Activated CD4-positive, alpha-beta memory T cell treated with anti-CD3 and anti-CD28 coated beads for 36 hours (primary cell): ENCODE measurements at regions of chr1 and their contacts with region 1.

Region 1: DNA sequence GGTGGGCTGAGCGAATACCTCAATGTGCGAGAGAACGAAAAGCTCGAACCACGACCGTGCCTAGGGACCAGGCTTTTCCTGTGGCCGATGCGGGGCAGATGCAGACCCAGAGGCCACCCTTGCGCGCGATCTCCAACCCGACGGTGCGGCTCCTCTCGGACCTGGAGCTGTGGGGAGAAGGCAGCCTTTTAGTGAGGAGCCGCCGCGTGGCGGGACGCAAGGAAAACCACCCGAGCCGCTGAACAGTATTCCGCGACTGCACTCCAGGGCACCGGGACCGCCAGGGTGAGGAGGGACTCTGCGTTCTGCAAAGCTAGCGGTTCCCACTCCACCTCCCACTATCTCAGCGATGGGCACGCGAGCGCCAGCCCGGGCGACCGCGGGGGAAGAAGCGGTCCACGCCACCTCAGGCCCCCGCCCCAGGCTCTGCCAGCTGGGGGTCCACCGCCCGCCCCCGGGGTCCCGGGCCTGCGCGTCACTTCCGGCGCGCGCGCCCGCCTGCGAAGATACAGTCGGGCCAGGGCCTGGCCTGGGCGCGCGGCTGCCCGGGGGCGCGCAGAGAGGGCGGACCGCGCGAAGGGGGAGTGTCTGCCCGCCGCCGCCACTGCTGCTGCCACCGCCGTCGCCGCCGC is 66.5 kb upstream of the PRKACB start:
- DNase-seq: peak; percentile 78
- H3K4me3 Mint-ChIP-seq: peak overlapping the region; percentile 83
- H3K27ac Mint-ChIP-seq: peak overlapping the region; percentile 38
- H3K4me1 Mint-ChIP-seq: peaks cover 11% of the 10 kb centered on the region
- H3K27me3 Mint-ChIP-seq: peaks cover 3% of the 10 kb centered on the region

Region 2: DNA sequence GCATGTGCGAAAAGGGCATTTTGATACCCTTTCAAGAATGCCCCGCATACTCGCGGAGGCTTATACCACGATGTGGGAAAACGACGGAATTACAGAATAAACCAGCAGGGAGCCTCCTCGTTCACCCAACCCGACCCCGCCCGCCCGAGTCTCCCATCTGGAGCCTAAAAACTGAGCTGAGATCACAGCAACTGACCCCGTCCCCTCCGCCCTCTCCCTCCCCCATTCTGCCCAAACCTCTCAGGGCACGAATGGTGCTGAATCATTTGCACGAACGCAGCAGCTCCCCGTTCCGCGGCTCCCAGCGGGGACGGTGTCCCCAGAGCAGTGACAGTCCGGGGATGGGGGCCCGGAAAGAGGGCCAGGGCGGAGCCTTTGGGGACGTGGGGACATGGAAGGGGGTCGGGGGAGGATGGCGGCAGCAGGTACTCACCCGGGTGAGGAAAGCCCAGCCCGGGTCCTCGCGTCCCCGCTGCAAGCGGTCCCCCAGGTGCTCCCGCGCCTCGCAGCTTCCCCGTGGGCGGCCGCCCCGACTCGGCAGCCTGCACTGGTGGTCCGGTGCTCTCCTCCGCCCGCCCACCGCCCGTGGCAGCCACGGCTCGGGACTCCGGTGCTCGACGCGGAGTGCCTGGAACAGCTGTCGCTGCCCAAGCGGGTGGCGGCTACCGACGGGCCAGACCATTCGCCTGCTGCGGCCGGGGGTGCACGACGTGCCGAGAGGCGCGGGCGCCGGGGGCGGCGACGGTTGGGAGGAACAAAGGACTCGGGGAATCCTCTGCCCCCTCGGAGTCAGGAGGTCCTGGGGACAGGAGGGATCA is 78.9 kb before region 1 on chr1 and contains the start of gene TTLL7:
- CTCF ChIA-PET with region 1: no interaction called
- POLR2A ChIA-PET with region 1: no interaction called
- intact Hi-C with region 1: loop called (anchors 2 kb)
- DNase-seq: peak; percentile 73
- H3K4me3 Mint-ChIP-seq: peak within 1 kb of the TSS; percentile 73
- H3K27ac Mint-ChIP-seq: no peak within 1 kb of the TSS
- H3K4me1 Mint-ChIP-seq: peaks cover 9% of the 10 kb centered on the region
- H3K27me3 Mint-ChIP-seq: peaks cover 52% of the 10 kb centered on the region
- total RNA-seq, gene TTLL7: 0.76 to 0.90 TPM

Region 3: DNA sequence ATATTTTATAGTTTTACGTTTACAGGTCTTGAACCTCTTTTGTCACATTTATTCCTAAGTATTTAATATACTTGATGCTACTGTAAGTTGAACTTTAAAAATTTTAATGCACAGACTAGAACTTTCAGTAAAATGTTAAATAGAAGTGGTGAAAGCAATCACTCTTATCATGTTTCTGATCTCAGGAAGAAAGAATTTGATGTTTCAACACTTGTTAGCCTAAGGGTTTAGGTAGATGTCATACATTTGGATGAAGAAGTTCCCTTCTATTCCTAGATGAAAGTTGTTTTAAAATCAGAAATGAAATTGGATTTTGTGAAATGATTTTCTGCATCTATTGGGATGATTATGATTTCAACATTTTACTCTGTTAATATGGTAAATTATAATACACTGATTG is 15.1 kb before region 1 on chr1:
- CTCF ChIA-PET with region 1: no interaction called
- POLR2A ChIA-PET with region 1: no interaction called
- intact Hi-C with region 1: no loop called
- DNase-seq: no peak
- H3K4me3 Mint-ChIP-seq: no peak overlapping the region
- H3K27ac Mint-ChIP-seq: no peak overlapping the region
- H3K4me1 Mint-ChIP-seq: no peaks in the 10 kb centered on the region
- H3K27me3 Mint-ChIP-seq: peaks cover 12% of the 10 kb centered on the region

Region 4: GRCh38 chr1:84090447-84091245 is 13.1 kb after region 1 on chr1:
- CTCF ChIA-PET with region 1: no interaction called
- POLR2A ChIA-PET with region 1: interaction called, 3 read pairs
- intact Hi-C with region 1: loop called (anchors 1 kb)
- DNase-seq: peak; percentile 8
- H3K4me3 Mint-ChIP-seq: peak overlapping the region; percentile 39
- H3K27ac Mint-ChIP-seq: peak overlapping the region; percentile 46
- H3K4me1 Mint-ChIP-seq: peaks cover 23% of the 10 kb centered on the region
- H3K27me3 Mint-ChIP-seq: peaks cover 3% of the 10 kb centered on the region